K562 (cell line): ENCODE measurements at regions of chr6 and their contacts with region 1.

Region 1: DNA sequence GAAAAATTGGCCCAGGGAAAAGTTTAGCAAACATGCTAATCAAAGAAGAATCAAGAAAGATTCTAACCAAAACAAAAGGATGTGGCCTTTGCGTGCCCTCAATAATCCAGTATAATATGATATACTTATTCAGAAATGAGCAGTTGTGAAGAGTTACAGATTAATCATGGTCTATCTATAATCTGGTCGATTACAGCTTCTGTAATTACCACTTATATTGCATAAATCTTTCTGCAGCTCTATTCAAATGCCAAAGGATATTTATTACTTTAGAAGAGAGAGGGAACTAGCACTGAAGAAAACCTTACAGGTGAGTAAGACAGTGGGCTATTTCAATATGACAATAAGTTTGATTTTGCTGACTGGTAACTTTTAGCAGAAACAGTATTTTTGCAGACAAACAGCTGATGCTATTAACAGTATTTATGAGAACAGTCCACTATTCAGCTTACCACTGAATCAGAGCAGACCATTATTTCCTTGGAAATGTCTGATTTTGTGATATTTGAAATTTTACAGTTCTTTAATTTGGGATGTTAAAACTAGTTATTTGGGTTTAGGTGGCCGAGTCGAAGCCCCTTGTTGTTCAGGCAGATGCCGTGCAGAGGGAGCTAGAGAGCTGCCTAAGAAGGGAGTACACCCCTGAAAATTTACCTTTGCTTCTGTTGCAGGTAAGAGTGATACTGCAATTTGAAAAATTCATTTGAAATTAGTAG is 92.2 kb downstream of the CEP57L1 start:
- DNase-seq: peak; percentile 56 to 74 (median 68)
- ATAC-seq: peak; percentile 88
- H3K4me3 ChIP-seq: no peak overlapping the region
- H3K27ac ChIP-seq: no peak overlapping the region
- H3K4me1 ChIP-seq: peaks cover 0 to 11% of the 10 kb centered on the region in 2 experiments; a peak in 3 of 5 replicates
- H3K27me3 ChIP-seq: no peaks in the 10 kb centered on the region
- CTCF ChIP-seq: peak; percentile 84 to 91 (median 90)
- EP300 ChIP-seq: no peak
- POLR2A ChIP-seq: no peak
- RAD21 ChIP-seq: peak; percentile 97 to 98

Region 2: GRCh38 chr6:108541838-108542759 is 645.5 kb before region 1 on chr6:
- CTCF ChIA-PET with region 1: no interaction called
- POLR2A ChIA-PET with region 1: no interaction called
- in situ Hi-C with region 1: no loop called
- intact Hi-C with region 1: loop called (anchors 10 kb)
- DNase-seq: peak; percentile 64 to 81 (median 64)
- ATAC-seq: peak; percentile 94
- H3K4me3 ChIP-seq: no peak overlapping the region
- H3K27ac ChIP-seq: no peak overlapping the region
- H3K4me1 ChIP-seq: no peaks in the 10 kb centered on the region
- H3K27me3 ChIP-seq: 0 out of 5 replicates have a peak, but pooled peaks cover 0 to 4% of the 10 kb centered on the region in 2 experiments
- CTCF ChIP-seq: peak; percentile 83 to 96 (median 87)
- EP300 ChIP-seq: no peak
- POLR2A ChIP-seq: no peak
- RAD21 ChIP-seq: peak; percentile 98 to 99

Region 3: GRCh38 chr6:109236115-109237076 is 48.8 kb after region 1 on chr6:
- CTCF ChIA-PET with region 1: no interaction called
- POLR2A ChIA-PET with region 1: interaction called, 4 read pairs
- in situ Hi-C with region 1: no loop called
- intact Hi-C with region 1: loop called (anchors 2 kb)
- DNase-seq: peak; percentile 43 to 92 (median 60)
- ATAC-seq: peak; percentile 94
- H3K4me3 ChIP-seq: 0 out of 2 replicates have a peak overlapping the region, but pooled peaks have one; percentile 1
- H3K27ac ChIP-seq: peak overlapping the region; percentile 93
- H3K4me1 ChIP-seq: peaks cover 19 to 57% of the 10 kb centered on the region in 2 experiments
- H3K27me3 ChIP-seq: no peaks in the 10 kb centered on the region
- CTCF ChIP-seq: peak; percentile 65 to 76 (median 73)
- EP300 ChIP-seq: peak; percentile 23; the same call in 1 of the 2 replicates
- POLR2A ChIP-seq: no peak
- RAD21 ChIP-seq: peak; percentile 75 to 92

Region 4: GRCh38 chr6:109382576-109383437 is 195.2 kb after region 1 on chr6:
- CTCF ChIA-PET with region 1: interaction called, 21 read pairs
- POLR2A ChIA-PET with region 1: interaction called, 13 read pairs
- in situ Hi-C with region 1: loop called (anchors 5 kb)
- intact Hi-C with region 1: loop called (anchors 1 kb)
- DNase-seq: peak; percentile 86 to 96 (median 91)
- ATAC-seq: peak; percentile 80
- H3K4me3 ChIP-seq: peak overlapping the region; percentile 83
- H3K27ac ChIP-seq: peak overlapping the region; percentile 99
- H3K4me1 ChIP-seq: peaks cover 4 to 26% of the 10 kb centered on the region in 2 experiments; a peak in 4 of 5 replicates
- H3K27me3 ChIP-seq: no peaks in the 10 kb centered on the region
- CTCF ChIP-seq: peak; percentile 56 to 83 (median 62)
- EP300 ChIP-seq: no peak; the same call in 1 of the 2 replicates
- POLR2A ChIP-seq: peak; percentile 59
- RAD21 ChIP-seq: peak; percentile 77 to 80

Region 5: GRCh38 chr6:109440331-109441068 is 252.9 kb after region 1 on chr6 and contains the starts of genes PPIL6 and SMPD2:
- CTCF ChIA-PET with region 1: no interaction called
- POLR2A ChIA-PET with region 1: no interaction called
- in situ Hi-C with region 1: no loop called
- intact Hi-C with region 1: loop called (anchors 2 kb)
- DNase-seq: peak; percentile 92 to 95 (median 94)
- ATAC-seq: peak; percentile 90
- H3K4me3 ChIP-seq: peak within 1 kb of the TSS; percentile 86
- H3K27ac ChIP-seq: peak within 1 kb of the TSS; percentile 74
- H3K4me1 ChIP-seq: peaks cover 13 to 27% of the 10 kb centered on the region in 2 experiments; a peak in 4 of 5 replicates
- H3K27me3 ChIP-seq: no peaks in the 10 kb centered on the region
- CTCF ChIP-seq: peak in 2 of 3 experiments; percentile 45 to 47; a peak in 4 of 6 replicates
- EP300 ChIP-seq: 0 out of 2 replicates have a peak, but pooled peaks have one; percentile 19
- POLR2A ChIP-seq: peak; percentile 75
- RAD21 ChIP-seq: no peak
- polyA plus RNA-seq, gene PPIL6: 0.13 to 0.14 TPM
- polyA plus RNA-seq, gene SMPD2: 0.13 to 1.2 TPM

Region 6: DNA sequence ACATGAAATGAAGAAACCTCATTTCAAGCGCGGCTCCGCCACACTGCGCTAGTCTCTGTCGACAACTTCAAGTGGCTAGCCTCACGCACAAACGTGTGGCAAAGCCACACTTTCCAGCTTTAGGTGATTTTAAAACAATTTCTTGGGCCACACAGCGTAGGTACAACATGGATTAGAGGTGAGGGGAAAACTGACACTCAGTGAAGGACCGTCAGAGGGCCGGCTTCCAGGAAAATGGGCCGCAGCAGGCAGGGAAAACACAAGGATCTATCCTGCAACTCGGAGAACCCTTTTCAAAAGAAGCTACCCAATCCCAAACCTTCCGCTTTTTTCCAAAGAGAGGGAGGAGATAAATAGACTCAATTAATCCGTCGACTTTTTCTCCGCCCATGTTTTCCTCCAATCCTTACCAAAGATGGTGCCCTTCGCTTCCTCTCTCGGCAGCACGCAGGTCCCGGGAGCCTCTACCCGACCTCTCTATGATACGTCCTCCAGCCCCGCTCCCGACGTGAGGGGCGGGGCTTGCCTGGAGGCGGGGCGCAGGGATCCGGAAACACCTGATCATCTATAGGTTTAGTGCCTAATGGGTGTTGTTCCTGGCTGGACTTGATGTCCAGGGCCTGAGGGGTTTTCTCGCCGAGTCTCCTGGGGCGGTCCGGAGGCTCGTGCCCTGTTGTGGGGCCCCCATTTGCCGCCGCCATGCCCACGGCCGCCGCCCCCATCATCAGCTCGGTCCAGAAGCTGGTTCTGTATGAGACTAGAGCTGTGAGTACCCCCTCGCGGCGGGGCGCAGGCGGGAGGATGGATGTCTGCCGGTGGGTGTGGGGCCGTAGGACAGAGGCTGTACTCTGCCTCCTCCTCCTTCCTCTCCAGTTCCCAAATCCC is 503.4 kb after region 1 on chr6 and contains the starts of genes AK9 and FIG4:
- CTCF ChIA-PET with region 1: no interaction called
- POLR2A ChIA-PET with region 1: no interaction called
- in situ Hi-C with region 1: no loop called
- intact Hi-C with region 1: loop called (anchors 10 kb)
- DNase-seq: peak; percentile 89 to 95 (median 92)
- ATAC-seq: peak; percentile 100
- H3K4me3 ChIP-seq: peak within 1 kb of the TSS; percentile 55
- H3K27ac ChIP-seq: peak within 1 kb of the TSS; percentile 29; the same call in 1 of the 3 replicates
- H3K4me1 ChIP-seq: peaks cover 0 to 12% of the 10 kb centered on the region in 2 experiments; a peak in 3 of 5 replicates
- H3K27me3 ChIP-seq: peaks cover 2 to 4% of the 10 kb centered on the region in 2 experiments; a peak in 2 of 5 replicates
- CTCF ChIP-seq: peak in 2 of 3 experiments; percentile 29 to 36; a peak in 3 of 6 replicates
- EP300 ChIP-seq: no peak
- POLR2A ChIP-seq: peak; percentile 69
- RAD21 ChIP-seq: peak; percentile 42 to 46; a peak in 3 of 4 replicates
- polyA plus RNA-seq, gene AK9: 1.2 to 1.9 TPM
- polyA plus RNA-seq, gene FIG4: 1.5 to 1.8 TPM